GM13977 (cell line): ENCODE measurements at regions of chr7 and their contacts with region 1.

Region 1: GRCh38 chr7:93902777-93903423 is 3.5 kb upstream of the GNGT1 start:
- DNase-seq: no peak
- CTCF ChIP-seq: peak; percentile 62

Region 2: GRCh38 chr7:93575555-93576390 is 327.1 kb before region 1 on chr7:
- in situ Hi-C with region 1: no loop called
- DNase-seq: no peak
- CTCF ChIP-seq: no peak

Region 3: GRCh38 chr7:94087664-94088352 is 184.9 kb after region 1 on chr7:
- in situ Hi-C with region 1: loop called (anchors 10 kb)
- DNase-seq: peak; percentile 80
- CTCF ChIP-seq: peak; percentile 74